Activated CD8-positive, alpha-beta T cell treated with anti-CD3 and anti-CD28 coated beads for 36 hours (primary cell): ENCODE measurements at regions of chr12 and their contacts with region 1.

Region 1: DNA sequence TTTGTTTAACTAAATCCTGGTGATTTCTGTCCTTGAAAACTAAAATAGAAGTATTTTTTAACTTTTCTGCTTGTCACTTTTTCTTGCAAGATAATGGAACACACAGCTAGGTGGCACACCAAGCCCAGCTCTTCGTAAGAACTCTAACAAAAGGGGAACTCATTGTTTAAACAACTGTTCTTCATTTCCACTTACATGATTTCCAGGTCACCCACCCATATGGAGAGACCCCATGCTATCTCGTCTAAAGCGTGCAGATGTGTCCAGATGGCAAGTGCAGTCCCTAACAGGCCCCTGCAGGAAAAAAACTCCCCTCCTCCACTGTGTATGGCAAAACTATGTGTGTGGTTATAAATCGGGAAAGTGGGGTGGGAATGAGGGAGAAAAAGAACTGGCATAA is 43.3 kb upstream of the NT5DC3 start:
- DNase-seq: peak; percentile 74
- ATAC-seq: peak; percentile 17
- H3K4me3 Mint-ChIP-seq: no peak overlapping the region
- H3K27ac Mint-ChIP-seq: no peak overlapping the region
- H3K4me1 Mint-ChIP-seq: peaks cover 42% of the 10 kb centered on the region
- H3K27me3 Mint-ChIP-seq: no peaks in the 10 kb centered on the region
- CTCF ChIP-seq: peak; percentile 72

Region 2: GRCh38 chr12:103530307-103531066 is 353.8 kb before region 1 on chr12:
- CTCF ChIA-PET with region 1: no interaction called
- POLR2A ChIA-PET with region 1: no interaction called
- intact Hi-C with region 1: no loop called
- DNase-seq: peak; percentile 38
- ATAC-seq: peak; percentile 62
- H3K4me3 Mint-ChIP-seq: no peak overlapping the region
- H3K27ac Mint-ChIP-seq: no peak overlapping the region
- H3K4me1 Mint-ChIP-seq: peaks cover 5% of the 10 kb centered on the region
- H3K27me3 Mint-ChIP-seq: peaks cover 6% of the 10 kb centered on the region
- CTCF ChIP-seq: no peak

Region 3: DNA sequence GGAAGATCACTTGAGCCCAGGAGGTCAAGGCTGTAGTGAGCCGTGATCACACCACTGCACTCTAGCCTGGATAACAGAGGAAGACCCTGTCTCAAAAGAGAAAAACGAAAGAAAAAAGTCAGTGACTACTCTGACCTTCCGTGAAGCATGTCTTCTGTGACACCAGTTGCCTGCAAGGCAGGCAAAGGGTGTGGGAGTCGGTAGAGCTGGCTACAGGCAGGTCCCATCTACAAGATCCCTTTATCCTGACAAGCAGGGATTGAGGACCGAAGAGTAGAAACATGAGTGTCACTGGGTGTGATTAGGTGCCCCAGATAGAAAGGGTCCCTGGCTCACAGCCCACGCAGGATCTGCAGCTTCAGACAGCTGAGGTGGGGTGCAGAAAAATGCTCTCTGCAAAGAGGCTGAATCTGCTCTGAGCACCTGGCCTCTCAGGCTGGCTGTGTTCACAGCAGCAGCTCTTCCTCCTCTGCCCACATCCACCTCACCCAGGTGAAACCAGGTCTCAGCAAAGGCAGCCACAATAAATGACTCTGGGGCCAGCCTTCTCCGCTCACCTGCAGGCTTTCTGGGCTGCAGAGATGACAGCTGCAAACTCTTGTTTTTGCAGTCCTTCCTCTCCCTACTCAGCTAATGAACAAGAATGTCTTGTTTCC is 17.3 kb after region 1 on chr12:
- CTCF ChIA-PET with region 1: interaction called, 13 read pairs
- POLR2A ChIA-PET with region 1: interaction called, 5 read pairs
- intact Hi-C with region 1: no loop called
- DNase-seq: peak; percentile 52
- ATAC-seq: peak; percentile 54
- H3K4me3 Mint-ChIP-seq: peak overlapping the region; percentile 58
- H3K27ac Mint-ChIP-seq: peak overlapping the region; percentile 82
- H3K4me1 Mint-ChIP-seq: peaks cover 65% of the 10 kb centered on the region
- H3K27me3 Mint-ChIP-seq: no peaks in the 10 kb centered on the region
- CTCF ChIP-seq: no peak

Region 4: GRCh38 chr12:103965590-103966504 is 81.5 kb after region 1 on chr12 and contains the start of gene TDG:
- CTCF ChIA-PET with region 1: interaction called, 8 read pairs
- POLR2A ChIA-PET with region 1: interaction called, 3 read pairs
- intact Hi-C with region 1: loop called (anchors 5 kb)
- DNase-seq: peak; percentile 99
- ATAC-seq: peak; percentile 94
- H3K4me3 Mint-ChIP-seq: peak within 1 kb of the TSS; percentile 90
- H3K27ac Mint-ChIP-seq: peak within 1 kb of the TSS; percentile 98
- H3K4me1 Mint-ChIP-seq: peaks cover 40% of the 10 kb centered on the region
- H3K27me3 Mint-ChIP-seq: no peaks in the 10 kb centered on the region
- CTCF ChIP-seq: no peak
- total RNA-seq, gene TDG: 37.4 to 37.5 TPM

Region 5: DNA sequence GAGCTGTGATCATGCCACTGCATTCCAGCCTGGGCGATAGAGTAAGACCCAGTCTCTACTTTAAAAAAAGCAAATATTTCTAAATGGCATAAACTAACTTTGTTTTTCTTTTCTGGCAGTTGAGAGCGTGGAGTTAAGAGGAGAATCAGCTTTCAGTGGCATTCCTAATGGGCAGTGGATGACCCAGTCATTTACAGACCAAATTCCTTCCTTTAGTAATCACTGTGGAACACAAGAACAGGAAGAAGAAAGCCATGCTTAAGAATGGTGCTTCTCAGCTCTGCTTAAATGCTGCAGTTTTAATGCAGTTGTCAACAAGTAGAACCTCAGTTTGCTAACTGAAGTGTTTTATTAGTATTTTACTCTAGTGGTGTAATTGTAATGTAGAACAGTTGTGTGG is 102.5 kb after region 1 on chr12:
- CTCF ChIA-PET with region 1: no interaction called
- POLR2A ChIA-PET with region 1: no interaction called
- intact Hi-C with region 1: no loop called
- DNase-seq: no peak
- ATAC-seq: no peak
- H3K4me3 Mint-ChIP-seq: no peak overlapping the region
- H3K27ac Mint-ChIP-seq: no peak overlapping the region
- H3K4me1 Mint-ChIP-seq: no peaks in the 10 kb centered on the region
- H3K27me3 Mint-ChIP-seq: no peaks in the 10 kb centered on the region
- CTCF ChIP-seq: no peak